ENCODE measurements at regions of chr5 and their contacts with region 1.

Region 1: GRCh38 chr5:180012316-180012715 is 59.2 kb downstream of the RNF130 start:
- DNase-seq: no peak
- H3K4me3 ChIP-seq: no peak overlapping the region
- H3K27ac ChIP-seq: no peak overlapping the region
- H3K4me1 ChIP-seq: peaks cover 0 to 6% (median 3%) of the 10 kb centered on the region in 4 experiments; a peak in 2 of 7 replicates
- H3K27me3 ChIP-seq: no peaks in the 10 kb centered on the region
- CTCF ChIP-seq: no peak
- EP300 ChIP-seq: no peak
- POLR2A ChIP-seq: no peak
- RAD21 ChIP-seq: no peak

Region 2: DNA sequence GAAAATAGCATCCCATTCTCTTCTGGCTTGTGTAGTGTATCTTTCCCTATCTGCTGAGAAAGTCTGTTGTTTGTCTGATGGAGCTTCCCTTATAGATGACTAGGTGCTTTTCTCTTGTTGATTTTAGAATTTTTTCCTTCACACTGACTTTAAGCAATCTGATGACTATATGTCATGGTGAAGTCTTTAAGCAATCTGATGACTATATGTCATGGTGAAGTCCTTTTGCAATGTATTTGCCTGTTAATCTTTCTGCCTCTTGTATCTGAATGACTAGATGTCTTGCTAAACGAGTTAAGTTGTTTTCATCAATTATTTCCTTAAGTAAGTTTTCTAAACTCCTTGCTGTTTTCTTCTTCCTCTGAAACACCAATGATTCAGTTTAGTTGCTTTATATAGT is 21.2 kb before region 1 on chr5:
- CTCF ChIA-PET with region 1: interaction called, 11 read pairs
- POLR2A ChIA-PET with region 1: no interaction called
- DNase-seq: no peak
- H3K4me3 ChIP-seq: no peak overlapping the region
- H3K27ac ChIP-seq: no peak overlapping the region
- H3K4me1 ChIP-seq: no peaks in the 10 kb centered on the region
- H3K27me3 ChIP-seq: no peaks in the 10 kb centered on the region
- CTCF ChIP-seq: no peak
- EP300 ChIP-seq: no peak
- POLR2A ChIP-seq: no peak
- RAD21 ChIP-seq: no peak